IMR-90 (cell line): ENCODE measurements at regions of chr1 and their contacts with region 1.

Region 1: GRCh38 chr1:173768206-173768605 is 53.4 kb downstream of the KLHL20 start:
- DNase-seq: no peak
- ATAC-seq: no peak
- H3K4me3 ChIP-seq: no peak overlapping the region
- H3K27ac ChIP-seq: no peak overlapping the region
- H3K4me1 ChIP-seq: no peaks in the 10 kb centered on the region
- H3K27me3 ChIP-seq: no peaks in the 10 kb centered on the region
- CTCF ChIP-seq: no peak
- POLR2A ChIP-seq: no peak
- RAD21 ChIP-seq: no peak

Region 2: GRCh38 chr1:173789841-173790240 is 21.6 kb after region 1 on chr1:
- CTCF ChIA-PET with region 1: no interaction called
- POLR2A ChIA-PET with region 1: interaction called, 15 read pairs
- dilution Hi-C with region 1: no loop called
- in situ Hi-C with region 1: no loop called
- intact Hi-C with region 1: no loop called
- DNase-seq: no peak
- ATAC-seq: no peak
- H3K4me3 ChIP-seq: no peak overlapping the region
- H3K27ac ChIP-seq: no peak overlapping the region
- H3K4me1 ChIP-seq: no peaks in the 10 kb centered on the region
- H3K27me3 ChIP-seq: no peaks in the 10 kb centered on the region
- CTCF ChIP-seq: no peak
- POLR2A ChIP-seq: no peak
- RAD21 ChIP-seq: no peak

Region 3: DNA sequence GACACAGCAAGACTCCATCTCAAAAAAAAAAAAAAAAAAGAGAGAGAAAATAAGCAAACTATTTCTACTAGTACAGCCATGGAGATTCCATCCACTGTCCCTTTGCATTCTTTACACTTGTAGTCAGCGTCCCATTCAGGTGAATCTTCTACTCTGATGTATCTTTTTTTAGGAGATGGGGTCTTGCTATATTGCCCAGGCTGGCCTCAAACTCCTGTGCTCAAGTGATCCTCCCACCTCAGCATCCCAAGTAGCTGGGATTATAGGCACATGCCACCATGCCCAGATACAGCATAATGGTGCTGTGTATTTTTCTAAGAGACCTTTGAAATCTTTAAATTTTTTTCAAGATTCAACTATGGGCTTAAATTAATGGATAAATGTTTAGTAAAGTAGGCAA is 64.5 kb after region 1 on chr1:
- CTCF ChIA-PET with region 1: no interaction called
- POLR2A ChIA-PET with region 1: no interaction called
- dilution Hi-C with region 1: no loop called
- in situ Hi-C with region 1: no loop called
- intact Hi-C with region 1: no loop called
- DNase-seq: no peak
- ATAC-seq: no peak
- H3K4me3 ChIP-seq: no peak overlapping the region
- H3K27ac ChIP-seq: no peak overlapping the region
- H3K4me1 ChIP-seq: no peaks in the 10 kb centered on the region
- H3K27me3 ChIP-seq: no peaks in the 10 kb centered on the region
- CTCF ChIP-seq: no peak
- POLR2A ChIP-seq: no peak
- RAD21 ChIP-seq: no peak

Region 4: DNA sequence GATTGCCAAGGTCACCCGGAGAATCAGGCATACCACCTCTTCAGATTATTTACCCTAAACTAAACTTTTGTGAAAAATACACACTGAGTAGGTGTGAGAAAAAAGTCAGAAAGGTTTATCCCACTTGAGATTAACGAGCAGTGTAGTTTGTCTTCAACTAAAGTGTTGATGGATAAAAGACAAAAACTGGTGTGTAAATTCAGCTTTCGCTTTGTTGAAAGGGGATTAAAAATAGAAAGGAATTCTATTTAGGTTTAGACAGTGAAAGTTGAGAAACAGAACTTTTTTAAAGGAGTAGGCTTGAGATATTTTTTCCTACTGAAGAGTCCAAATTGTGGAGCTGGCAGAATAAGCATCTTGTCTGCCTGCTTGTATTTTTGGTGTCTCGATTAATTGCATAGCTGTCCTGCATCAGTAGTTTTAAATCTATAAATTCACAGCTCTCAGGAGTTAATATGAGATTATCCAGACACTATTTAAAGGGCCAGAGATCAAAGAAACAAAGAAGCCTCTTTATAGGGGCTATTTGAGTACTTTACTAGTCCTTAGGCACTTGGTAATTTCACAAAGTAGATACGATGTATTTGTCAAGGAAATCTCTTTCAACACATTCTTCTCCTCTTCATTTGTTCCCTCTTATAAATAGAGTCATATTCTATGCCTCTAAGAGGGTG is 344.4 kb after region 1 on chr1:
- CTCF ChIA-PET with region 1: no interaction called
- POLR2A ChIA-PET with region 1: no interaction called
- dilution Hi-C with region 1: no loop called
- in situ Hi-C with region 1: no loop called
- intact Hi-C with region 1: no loop called
- DNase-seq: no peak
- ATAC-seq: peak; percentile 29
- H3K4me3 ChIP-seq: no peak overlapping the region
- H3K27ac ChIP-seq: no peak overlapping the region
- H3K4me1 ChIP-seq: no peaks in the 10 kb centered on the region
- H3K27me3 ChIP-seq: no peaks in the 10 kb centered on the region
- CTCF ChIP-seq: no peak
- POLR2A ChIP-seq: no peak
- RAD21 ChIP-seq: no peak